Panc1 (cell line): ENCODE measurements at regions of chr14 and their contacts with region 1.

Region 1: DNA sequence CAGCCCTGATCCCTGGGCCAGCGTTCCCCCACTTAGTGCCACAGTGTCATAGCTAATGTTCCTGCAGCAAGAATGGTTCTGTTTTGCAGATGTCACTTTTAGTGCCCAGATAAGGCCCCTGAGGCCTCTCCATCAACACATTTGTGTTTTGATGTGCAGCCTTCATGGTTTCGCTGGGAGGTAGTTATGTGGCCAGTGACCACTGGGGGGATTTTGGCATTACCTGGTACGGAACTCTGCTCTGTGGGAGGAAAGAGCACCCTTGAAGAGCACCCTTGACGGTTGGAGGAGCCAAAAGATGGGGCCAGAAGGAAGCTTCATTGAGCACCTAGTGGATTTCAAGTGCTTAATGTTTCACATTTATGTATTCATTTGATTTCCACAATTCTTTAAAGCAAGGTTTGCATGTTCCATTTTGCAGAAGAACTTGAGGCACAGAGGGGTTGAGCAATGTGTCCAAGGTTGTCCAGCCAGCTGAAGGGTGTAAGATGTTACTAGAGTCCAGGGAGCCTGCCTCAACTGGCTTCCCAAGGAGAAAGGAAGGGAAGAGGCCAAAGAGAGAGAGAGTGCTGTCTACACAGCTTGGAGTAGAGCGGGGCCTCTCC is 13.0 kb downstream of the SERPINA11 start:
- DNase-seq: no peak
- ATAC-seq: no peak
- H3K4me3 ChIP-seq: no peak overlapping the region
- H3K27ac ChIP-seq: no peak overlapping the region
- H3K4me1 ChIP-seq: no peaks in the 10 kb centered on the region
- H3K27me3 ChIP-seq: no peaks in the 10 kb centered on the region
- CTCF ChIP-seq: no peak

Region 2: DNA sequence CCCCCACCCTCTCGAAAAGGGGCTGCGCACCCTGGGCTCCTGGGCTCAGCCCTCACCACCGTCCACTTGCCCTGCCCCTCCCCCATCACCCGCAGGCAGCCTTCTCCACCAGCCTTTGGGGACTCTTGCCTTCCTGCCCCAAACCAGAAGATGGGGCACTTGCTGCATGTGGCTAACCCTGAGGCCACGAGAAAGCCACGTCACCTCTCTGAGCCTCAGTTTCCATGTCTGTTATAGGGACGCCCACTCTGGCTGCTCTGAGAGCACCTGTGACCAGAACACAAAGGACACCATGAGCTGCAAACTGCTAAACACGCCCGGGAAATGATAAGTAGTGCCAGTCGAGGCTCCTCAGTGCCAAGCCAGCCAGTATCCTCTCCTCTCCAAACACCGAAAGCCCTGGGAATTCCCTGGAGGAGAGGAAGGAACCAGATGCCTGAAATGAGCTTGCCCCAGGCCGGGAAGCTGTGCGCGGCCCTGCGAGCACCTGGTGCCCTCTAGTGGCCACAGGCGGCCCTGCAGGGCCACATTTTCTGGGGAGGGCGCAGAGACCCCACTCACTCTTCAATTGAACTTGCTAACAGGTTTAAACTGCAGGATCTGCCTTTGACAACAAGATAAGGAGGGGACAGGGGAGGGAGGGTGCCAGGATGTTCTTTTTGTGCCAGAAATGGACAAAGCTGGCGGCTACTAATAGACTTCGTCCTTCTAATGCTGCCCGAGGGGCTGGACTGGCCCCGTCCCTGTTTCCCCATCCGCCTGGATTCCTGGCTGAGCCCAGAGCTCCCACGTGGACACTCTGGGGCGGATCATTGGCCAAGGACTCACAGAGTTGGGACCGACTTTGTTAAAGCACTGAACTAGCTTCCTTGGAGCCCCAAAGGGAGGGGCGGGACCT is 46.6 kb after region 1 on chr14:
- CTCF ChIA-PET with region 1: no interaction called
- POLR2A ChIA-PET with region 1: no interaction called
- in situ Hi-C with region 1: no loop called
- intact Hi-C with region 1: loop called (anchors 5 kb)
- DNase-seq: peak; percentile 18
- ATAC-seq: peak; percentile 90
- H3K4me3 ChIP-seq: peak overlapping the region in 1 of 2 experiments; percentile 29; a peak in 2 of 4 replicates
- H3K27ac ChIP-seq: no peak overlapping the region
- H3K4me1 ChIP-seq: no peaks in the 10 kb centered on the region
- H3K27me3 ChIP-seq: no peaks in the 10 kb centered on the region
- CTCF ChIP-seq: peak; percentile 97

Region 3: GRCh38 chr14:94548999-94549985 is 109.7 kb after region 1 on chr14:
- CTCF ChIA-PET with region 1: no interaction called
- POLR2A ChIA-PET with region 1: no interaction called
- in situ Hi-C with region 1: no loop called
- intact Hi-C with region 1: loop called (anchors 5 kb)
- DNase-seq: peak; percentile 15
- ATAC-seq: peak; percentile 82
- H3K4me3 ChIP-seq: no peak overlapping the region
- H3K27ac ChIP-seq: no peak overlapping the region
- H3K4me1 ChIP-seq: no peaks in the 10 kb centered on the region
- H3K27me3 ChIP-seq: no peaks in the 10 kb centered on the region
- CTCF ChIP-seq: peak; percentile 92